GM12878 (cell line): ENCODE measurements at regions of chr18 and their contacts with region 1.

Region 1: GRCh38 chr18:59907172-59907571 is 7.4 kb downstream of the PMAIP1 start:
- DNase-seq: no peak
- ATAC-seq: peak; percentile 16
- H3K4me3 ChIP-seq: peak overlapping the region; percentile 22; the same call in 1 of the 2 replicates
- H3K27ac ChIP-seq: peak overlapping the region; percentile 95
- H3K4me1 ChIP-seq: peaks cover 43% of the 10 kb centered on the region
- H3K27me3 ChIP-seq: no peaks in the 10 kb centered on the region
- CTCF ChIP-seq: no peak
- EP300 ChIP-seq: peak in 1 of 2 experiments; percentile 36; a peak in 1 of 4 replicates
- POLR2A ChIP-seq: no peak
- RAD21 ChIP-seq: no peak

Region 2: GRCh38 chr18:59876310-59876626 is 30.9 kb before region 1 on chr18:
- CTCF ChIA-PET with region 1: no interaction called
- POLR2A ChIA-PET with region 1: interaction called, 68 read pairs
- RAD21 ChIA-PET with region 1: interaction called, 45 read pairs
- SMC1A ChIA-PET with region 1: interaction called, 51 read pairs
- in situ Hi-C with region 1: no loop called
- intact Hi-C with region 1: no loop called
- DNase-seq: peak; percentile 86
- ATAC-seq: peak; percentile 79
- H3K4me3 ChIP-seq: peak overlapping the region; percentile 56; the same call in 1 of the 2 replicates
- H3K27ac ChIP-seq: peak overlapping the region; percentile 87
- H3K4me1 ChIP-seq: peaks cover 59% of the 10 kb centered on the region
- H3K27me3 ChIP-seq: no peaks in the 10 kb centered on the region
- CTCF ChIP-seq: no peak
- EP300 ChIP-seq: peak in 1 of 2 experiments; percentile 77; a peak in 3 of 4 replicates
- POLR2A ChIP-seq: no peak
- RAD21 ChIP-seq: no peak

Region 3: DNA sequence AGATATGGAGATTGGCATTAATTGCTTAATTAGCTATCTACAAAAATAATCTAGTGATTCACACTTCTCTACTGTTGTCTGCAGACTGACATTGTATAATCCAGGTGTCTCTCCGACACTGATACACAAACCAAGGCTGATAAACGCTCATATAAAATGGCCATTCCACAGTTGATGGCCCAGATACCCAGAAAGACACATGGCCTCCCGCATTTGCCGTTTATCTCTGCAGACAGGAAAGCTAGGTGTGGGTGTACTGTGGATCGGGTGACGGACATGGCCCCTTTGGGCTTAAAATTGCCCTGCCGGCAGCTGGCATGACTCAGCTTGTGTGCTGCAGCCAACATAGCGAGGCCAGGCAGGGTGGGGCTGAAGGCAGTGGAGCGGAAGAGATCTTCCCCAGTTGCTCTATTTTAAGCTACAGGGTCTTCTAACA is 11.2 kb after region 1 on chr18:
- CTCF ChIA-PET with region 1: interaction called, 47 read pairs
- POLR2A ChIA-PET with region 1: interaction called, 67 read pairs
- RAD21 ChIA-PET with region 1: interaction called, 187 read pairs
- SMC1A ChIA-PET with region 1: interaction called, 289 read pairs
- in situ Hi-C with region 1: no loop called
- intact Hi-C with region 1: loop called (anchors 2 kb)
- DNase-seq: peak; percentile 80
- ATAC-seq: peak; percentile 82
- H3K4me3 ChIP-seq: peak overlapping the region; percentile 5; the same call in 1 of the 2 replicates
- H3K27ac ChIP-seq: peak overlapping the region; percentile 74
- H3K4me1 ChIP-seq: peaks cover 47% of the 10 kb centered on the region
- H3K27me3 ChIP-seq: no peaks in the 10 kb centered on the region
- CTCF ChIP-seq: no peak
- EP300 ChIP-seq: peak in 1 of 2 experiments; percentile 27; a peak in 1 of 4 replicates
- POLR2A ChIP-seq: peak; percentile 44; the same call in 1 of the 2 replicates
- RAD21 ChIP-seq: no peak

Region 4: GRCh38 chr18:59950215-59950944 is 43.2 kb after region 1 on chr18:
- CTCF ChIA-PET with region 1: interaction called, 12 read pairs
- POLR2A ChIA-PET with region 1: interaction called, 13 read pairs
- RAD21 ChIA-PET with region 1: interaction called, 55 read pairs
- SMC1A ChIA-PET with region 1: interaction called, 68 read pairs
- in situ Hi-C with region 1: no loop called
- intact Hi-C with region 1: loop called (anchors 2 kb)
- DNase-seq: no peak
- ATAC-seq: peak; percentile 48
- H3K4me3 ChIP-seq: no peak overlapping the region; the same call in 1 of the 2 replicates
- H3K27ac ChIP-seq: no peak overlapping the region
- H3K4me1 ChIP-seq: peaks cover 40% of the 10 kb centered on the region
- H3K27me3 ChIP-seq: no peaks in the 10 kb centered on the region
- CTCF ChIP-seq: no peak
- EP300 ChIP-seq: 0 out of 4 replicates have a peak, but pooled peaks of 1 of the 2 experiments have one; percentile 49
- POLR2A ChIP-seq: no peak
- RAD21 ChIP-seq: no peak

Region 5: DNA sequence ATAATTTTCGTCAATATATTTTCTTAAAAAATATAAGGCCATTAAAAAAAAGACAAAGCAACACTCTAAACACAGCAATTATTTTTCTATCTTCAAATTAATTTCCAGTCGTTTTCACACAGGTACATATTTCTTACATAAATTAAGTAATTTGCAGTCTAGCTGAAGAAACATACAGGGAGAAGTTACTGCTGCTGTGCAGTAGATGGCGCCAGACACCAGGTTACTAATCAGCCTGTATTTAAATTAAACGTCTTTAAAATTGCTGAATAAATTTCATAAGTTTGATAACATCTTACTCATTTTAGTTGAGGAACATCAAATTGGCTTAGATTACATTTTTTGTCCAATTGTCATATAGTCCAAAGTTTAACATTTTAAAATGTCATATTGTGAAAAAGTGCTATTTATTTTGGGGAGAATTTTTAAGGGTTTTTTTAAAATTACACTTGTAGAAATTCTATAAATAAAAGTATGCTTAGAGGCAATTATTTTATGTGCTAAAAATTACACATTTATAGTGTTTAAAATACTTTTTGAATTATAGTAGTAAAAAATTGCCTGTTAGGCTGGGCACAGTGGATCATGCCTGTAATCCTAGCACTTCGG is 81.0 kb after region 1 on chr18:
- CTCF ChIA-PET with region 1: interaction called, 5 read pairs
- POLR2A ChIA-PET with region 1: interaction called, 3 read pairs
- RAD21 ChIA-PET with region 1: interaction called, 16 read pairs
- SMC1A ChIA-PET with region 1: interaction called, 33 read pairs
- in situ Hi-C with region 1: no loop called
- intact Hi-C with region 1: loop called (anchors 2 kb)
- DNase-seq: no peak
- ATAC-seq: peak; percentile 81
- H3K4me3 ChIP-seq: no peak overlapping the region
- H3K27ac ChIP-seq: no peak overlapping the region
- H3K4me1 ChIP-seq: no peaks in the 10 kb centered on the region
- H3K27me3 ChIP-seq: no peaks in the 10 kb centered on the region
- CTCF ChIP-seq: peak; percentile 83 to 90 (median 87)
- EP300 ChIP-seq: no peak
- POLR2A ChIP-seq: no peak
- RAD21 ChIP-seq: peak; percentile 96

Region 6: DNA sequence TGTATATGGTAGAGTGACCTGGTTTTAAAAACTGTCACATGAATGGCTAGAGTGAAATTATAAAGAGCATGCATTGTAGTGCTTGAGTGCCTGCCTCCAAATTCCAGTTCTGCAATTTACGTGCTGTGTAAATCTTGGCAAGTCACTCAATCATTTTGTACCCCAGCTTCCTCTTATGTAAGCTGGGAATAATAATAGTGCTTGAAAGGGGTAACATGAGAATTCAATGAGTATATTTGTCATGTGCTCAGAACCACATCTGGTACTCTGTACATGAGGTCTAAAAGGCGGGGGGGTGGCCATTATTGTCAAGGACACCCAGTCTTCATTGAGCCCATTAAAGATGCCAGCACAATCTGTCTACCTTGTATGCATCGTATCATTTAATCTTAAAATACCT is 250.6 kb after region 1 on chr18:
- CTCF ChIA-PET with region 1: no interaction called
- POLR2A ChIA-PET with region 1: no interaction called
- RAD21 ChIA-PET with region 1: no interaction called
- SMC1A ChIA-PET with region 1: no interaction called
- in situ Hi-C with region 1: no loop called
- intact Hi-C with region 1: no loop called
- DNase-seq: no peak
- ATAC-seq: no peak
- H3K4me3 ChIP-seq: no peak overlapping the region
- H3K27ac ChIP-seq: no peak overlapping the region
- H3K4me1 ChIP-seq: no peaks in the 10 kb centered on the region
- H3K27me3 ChIP-seq: no peaks in the 10 kb centered on the region
- CTCF ChIP-seq: no peak
- EP300 ChIP-seq: no peak
- POLR2A ChIP-seq: no peak
- RAD21 ChIP-seq: no peak